BJ (cell line): ENCODE measurements at regions of chr22 and their contacts with region 1.

Region 1: DNA sequence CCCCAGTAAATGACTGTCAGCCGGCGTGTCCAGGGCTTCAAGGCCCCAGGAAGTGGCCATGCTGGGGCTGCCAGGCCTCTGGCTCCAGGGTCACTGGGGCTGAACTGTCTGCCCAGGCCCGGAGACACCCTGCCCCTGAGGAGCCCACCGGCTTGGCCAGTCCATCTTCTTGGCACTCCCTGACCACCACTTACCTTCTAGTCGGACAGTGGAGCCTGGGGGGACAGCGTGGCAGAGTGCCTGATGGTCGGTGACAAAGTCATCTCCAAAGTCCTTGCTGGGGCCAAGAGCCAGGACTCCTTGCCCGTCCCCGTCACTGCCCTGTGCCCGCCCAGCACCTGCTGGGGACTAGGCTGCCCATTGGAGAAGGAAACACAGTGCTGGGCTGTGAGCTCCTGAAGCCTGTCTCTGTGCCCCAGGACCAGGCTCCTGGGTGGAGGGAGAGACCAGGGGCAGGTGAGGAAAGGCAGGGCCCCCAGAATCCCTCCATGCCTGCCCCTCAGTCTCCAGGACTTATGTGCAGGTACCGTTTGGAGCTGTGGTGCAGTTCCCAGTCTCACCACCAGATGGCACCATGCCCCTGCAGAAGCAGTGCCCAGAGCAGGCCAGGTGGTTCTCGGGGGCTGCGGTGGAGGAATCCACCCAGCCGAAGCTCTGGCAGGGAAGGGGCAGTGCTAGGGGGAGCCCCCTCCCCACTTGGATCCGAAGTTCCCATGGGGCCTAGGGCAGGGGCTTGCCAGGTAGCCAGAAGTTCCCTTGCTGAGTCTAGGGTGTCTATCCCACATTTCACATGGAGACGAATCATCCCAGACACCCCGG is 6.0 kb upstream of the CCDC188 start:
- DNase-seq: no peak
- H3K4me3 ChIP-seq: no peak overlapping the region
- H3K27me3 ChIP-seq: no peaks in the 10 kb centered on the region; the same call in 1 of the 2 replicates
- CTCF ChIP-seq: peak; percentile 94

Region 2: GRCh38 chr22:19909350-19910179 is 247.3 kb before region 1 on chr22:
- CTCF ChIA-PET with region 1: no interaction called
- POLR2A ChIA-PET with region 1: no interaction called
- DNase-seq: no peak
- H3K4me3 ChIP-seq: no peak overlapping the region
- H3K27me3 ChIP-seq: no peaks in the 10 kb centered on the region
- CTCF ChIP-seq: peak; percentile 90

Region 3: DNA sequence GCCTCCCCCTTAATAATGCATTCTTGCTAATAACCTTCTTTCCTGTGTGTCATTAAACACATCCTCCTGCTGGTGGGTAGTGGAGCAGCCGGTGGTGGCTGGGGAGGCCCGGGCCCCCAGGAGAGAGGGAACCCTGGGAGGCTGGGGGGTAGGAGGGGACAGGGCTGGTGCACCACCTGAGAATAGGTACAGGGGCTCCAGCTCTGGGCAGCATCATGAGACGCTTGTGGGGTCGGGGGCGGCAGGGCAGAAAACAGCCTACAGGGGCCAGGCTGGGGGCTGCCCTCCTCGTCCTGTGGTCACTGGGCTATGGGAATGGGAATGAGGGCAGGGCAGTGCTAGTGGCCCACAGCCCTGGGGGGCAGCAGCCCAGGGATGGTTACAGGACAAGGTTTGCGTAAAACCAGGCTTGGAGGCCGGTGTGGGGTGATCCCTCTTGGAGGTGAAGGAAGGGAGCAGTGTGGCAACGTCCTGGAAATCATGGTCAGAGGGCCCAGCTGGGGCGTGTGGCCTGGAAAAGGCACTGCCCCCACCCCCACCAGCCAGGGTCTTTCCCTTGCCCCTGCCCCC is 12.5 kb after region 1 on chr22:
- CTCF ChIA-PET with region 1: interaction called, 11 read pairs
- POLR2A ChIA-PET with region 1: no interaction called
- DNase-seq: no peak
- H3K4me3 ChIP-seq: no peak overlapping the region
- H3K27me3 ChIP-seq: peaks cover 1% of the 10 kb centered on the region; the same call in 1 of the 2 replicates
- CTCF ChIP-seq: no peak

Region 4: GRCh38 chr22:20268279-20269012 is 111.6 kb after region 1 on chr22 and contains the start of gene RTN4R:
- CTCF ChIA-PET with region 1: interaction called, 25 read pairs
- POLR2A ChIA-PET with region 1: no interaction called
- DNase-seq: no peak
- H3K4me3 ChIP-seq: peak within 1 kb of the TSS; percentile 23
- H3K27me3 ChIP-seq: 0 out of 2 replicates have a peak, but pooled peaks cover 2% of the 10 kb centered on the region
- CTCF ChIP-seq: peak; percentile 33
- polyA plus RNA-seq, gene RTN4R: 0.40 and 0.77 TPM in 2 replicates

Region 5: DNA sequence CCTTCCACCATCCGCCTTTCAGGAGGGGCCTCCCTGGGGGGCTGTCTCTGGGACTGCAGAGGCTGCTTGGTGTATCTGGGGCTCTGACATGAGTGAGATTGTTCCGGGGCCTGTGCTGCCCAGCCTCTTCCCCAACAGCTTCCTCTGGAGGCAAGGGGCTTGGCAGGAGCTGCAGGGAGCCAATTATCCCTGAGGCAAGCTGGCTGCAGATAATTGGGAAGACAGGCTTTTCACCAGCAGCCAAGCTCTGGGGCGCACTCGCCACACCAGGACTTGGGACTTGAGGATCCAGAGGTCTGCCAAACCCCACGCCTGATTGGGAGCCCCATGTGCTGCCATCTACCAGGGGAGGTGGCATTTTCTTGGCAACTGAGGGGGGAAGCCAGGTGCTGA is 126.8 kb after region 1 on chr22:
- CTCF ChIA-PET with region 1: interaction called, 91 read pairs
- POLR2A ChIA-PET with region 1: no interaction called
- DNase-seq: no peak
- H3K4me3 ChIP-seq: no peak overlapping the region
- H3K27me3 ChIP-seq: no peaks in the 10 kb centered on the region; the same call in 1 of the 2 replicates
- CTCF ChIP-seq: no peak

Region 6: DNA sequence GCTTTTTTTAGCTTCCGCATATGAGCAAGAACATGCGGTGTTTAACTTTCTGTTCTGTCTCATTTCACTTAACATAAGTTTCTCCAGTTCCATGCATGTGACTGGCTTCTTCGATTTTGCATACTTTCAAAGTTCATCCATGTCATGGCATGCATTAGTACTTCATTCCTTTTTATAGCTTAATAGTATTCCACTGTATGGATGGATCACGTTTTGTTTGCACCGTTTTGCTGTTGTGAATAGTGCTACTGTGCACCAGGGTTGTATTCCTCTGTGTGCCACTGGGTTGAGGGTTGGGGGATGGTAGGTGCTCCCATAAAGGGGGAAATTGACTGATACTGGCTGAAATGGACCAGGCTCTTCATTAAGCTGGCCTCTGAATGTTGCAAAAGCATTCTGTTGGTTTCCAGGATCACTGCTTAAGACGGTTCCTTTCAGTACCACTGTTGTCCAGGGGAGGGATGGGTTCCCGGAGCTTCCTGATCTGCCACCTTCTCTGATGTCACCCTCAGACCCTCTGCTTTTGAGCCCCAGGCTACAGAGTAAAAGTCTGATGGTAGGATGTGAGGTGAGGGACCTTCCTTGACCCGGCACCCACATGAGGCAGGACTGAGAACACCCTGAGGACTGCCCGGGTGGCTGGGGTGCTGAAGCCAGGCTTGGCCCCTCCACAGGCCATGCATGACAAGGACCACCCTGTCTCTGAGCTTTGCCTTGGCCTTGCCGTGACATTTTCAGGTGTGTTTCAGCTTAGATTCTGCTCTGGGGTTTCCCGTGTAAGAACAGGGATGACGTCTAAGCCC is 138.6 kb after region 1 on chr22:
- CTCF ChIA-PET with region 1: interaction called, 16 read pairs
- POLR2A ChIA-PET with region 1: no interaction called
- DNase-seq: no peak
- H3K4me3 ChIP-seq: no peak overlapping the region
- H3K27me3 ChIP-seq: peaks cover 7% of the 10 kb centered on the region
- CTCF ChIP-seq: no peak